CD8-positive, alpha-beta T cell (primary cell): ENCODE measurements at regions of chr22 and their contacts with region 1.

Region 1: DNA sequence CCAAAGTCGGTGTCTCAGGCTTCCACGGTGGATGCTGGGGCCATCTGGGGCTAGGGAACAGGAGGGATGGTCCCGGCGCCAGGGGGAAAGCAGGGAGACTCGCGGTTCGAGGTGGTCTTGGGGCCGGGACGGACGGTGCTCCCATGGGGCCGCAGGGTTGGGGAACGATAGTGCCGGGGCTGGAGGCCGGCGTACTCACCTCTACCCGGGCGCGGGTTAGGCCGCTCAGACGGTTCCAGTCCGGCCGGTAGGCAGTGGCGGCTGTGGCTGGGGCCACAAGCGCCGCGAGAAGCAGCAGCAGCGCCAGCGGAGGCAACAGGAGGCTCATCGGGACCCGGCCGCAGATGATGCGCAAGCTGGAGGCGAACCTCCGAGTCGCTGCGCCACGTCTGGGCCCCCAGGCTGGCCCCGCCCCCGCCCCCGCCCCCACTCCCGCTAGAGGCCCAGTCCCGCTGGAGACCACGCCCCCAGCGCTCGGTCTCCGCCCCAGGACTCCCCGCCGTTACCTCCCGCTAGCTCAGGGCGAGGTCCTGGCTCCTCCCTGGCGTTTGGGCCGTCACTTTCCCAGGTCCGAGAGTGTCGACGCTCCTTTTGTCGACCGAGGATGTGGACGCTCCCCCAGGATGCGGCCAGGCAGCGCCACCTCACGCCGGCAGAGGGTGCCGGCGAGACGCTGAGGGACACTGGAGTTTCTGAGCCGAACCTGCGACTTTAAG is at the start of gene SELENOM:
- DNase-seq: peak; percentile 69 to 94 (median 85)
- ATAC-seq: peak; percentile 96
- H3K4me3 ChIP-seq: peak within 1 kb of the TSS; percentile 80 to 84
- H3K4me3 Mint-ChIP-seq: peak within 1 kb of the TSS; percentile 98
- H3K27ac ChIP-seq: peak within 1 kb of the TSS; percentile 72 to 80
- H3K27ac Mint-ChIP-seq: peak within 1 kb of the TSS; percentile 91
- H3K4me1 ChIP-seq: peaks cover 17% of the 10 kb centered on the region
- H3K4me1 Mint-ChIP-seq: peaks cover 25% of the 10 kb centered on the region
- H3K27me3 ChIP-seq: no peaks in the 10 kb centered on the region
- H3K27me3 Mint-ChIP-seq: no peaks in the 10 kb centered on the region
- CTCF ChIP-seq: peak; percentile 70
- total RNA-seq, gene SELENOM: 55.6 to 62.2 TPM

Region 2: DNA sequence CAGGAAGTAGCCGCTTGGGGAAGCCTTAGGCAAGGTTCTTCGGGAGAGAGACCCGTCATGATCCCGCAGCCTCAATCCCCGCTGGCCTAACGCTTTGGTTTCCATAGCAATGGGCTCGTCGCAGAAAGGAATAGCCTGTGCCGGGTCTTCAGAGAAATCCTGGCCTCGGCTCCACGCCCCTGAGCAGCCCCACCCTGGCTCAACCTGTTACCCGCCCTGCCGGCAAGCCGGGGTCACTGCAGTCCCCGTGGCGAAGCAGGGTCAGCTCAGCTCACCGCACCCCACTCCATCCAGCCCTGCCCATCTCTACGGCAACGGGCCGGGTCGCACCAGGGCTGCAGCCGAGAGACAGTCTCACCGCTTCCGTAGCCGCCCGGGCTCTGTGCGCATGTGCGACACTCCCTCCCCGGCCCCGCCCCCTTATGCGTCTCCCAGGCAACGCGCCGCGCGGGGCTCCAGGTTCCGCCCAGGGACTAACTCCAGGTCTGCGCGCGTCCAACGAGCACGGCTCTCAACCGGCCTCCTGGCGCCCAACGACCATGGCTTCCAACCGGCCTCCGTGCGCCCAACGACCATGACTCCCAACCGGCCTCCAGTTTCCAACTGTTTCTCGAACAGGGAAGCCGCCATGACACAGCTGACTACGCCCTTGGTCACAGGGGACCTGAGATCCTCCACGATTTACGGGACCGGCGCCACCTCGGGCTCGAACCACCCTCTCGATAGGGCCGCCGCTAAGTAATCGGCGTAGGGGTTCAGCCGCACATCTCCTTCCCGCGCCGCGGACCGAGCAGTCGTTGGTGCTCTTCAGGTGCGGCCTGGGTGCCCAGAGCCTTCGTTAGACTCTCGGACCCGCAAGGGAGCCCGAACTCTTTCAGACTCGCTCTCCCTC is 439.6 kb before region 1 on chr22 and contains the start of gene DUSP18:
- CTCF ChIA-PET with region 1: no interaction called
- POLR2A ChIA-PET with region 1: no interaction called
- intact Hi-C with region 1: loop called in 1 of 2 experiments (anchors 5 kb)
- DNase-seq: peak; percentile 88 to 98 (median 95)
- ATAC-seq: peak; percentile 90
- H3K4me3 ChIP-seq: peak within 1 kb of the TSS; percentile 73 to 87
- H3K4me3 Mint-ChIP-seq: peak within 1 kb of the TSS; percentile 96
- H3K27ac ChIP-seq: peak within 1 kb of the TSS; percentile 54 to 72
- H3K27ac Mint-ChIP-seq: peak within 1 kb of the TSS; percentile 94
- H3K4me1 ChIP-seq: peaks cover 11% of the 10 kb centered on the region
- H3K4me1 Mint-ChIP-seq: peaks cover 18% of the 10 kb centered on the region
- H3K27me3 ChIP-seq: no peaks in the 10 kb centered on the region
- H3K27me3 Mint-ChIP-seq: no peaks in the 10 kb centered on the region
- CTCF ChIP-seq: no peak
- total RNA-seq, gene DUSP18: 3.4 to 4.5 TPM

Region 3: DNA sequence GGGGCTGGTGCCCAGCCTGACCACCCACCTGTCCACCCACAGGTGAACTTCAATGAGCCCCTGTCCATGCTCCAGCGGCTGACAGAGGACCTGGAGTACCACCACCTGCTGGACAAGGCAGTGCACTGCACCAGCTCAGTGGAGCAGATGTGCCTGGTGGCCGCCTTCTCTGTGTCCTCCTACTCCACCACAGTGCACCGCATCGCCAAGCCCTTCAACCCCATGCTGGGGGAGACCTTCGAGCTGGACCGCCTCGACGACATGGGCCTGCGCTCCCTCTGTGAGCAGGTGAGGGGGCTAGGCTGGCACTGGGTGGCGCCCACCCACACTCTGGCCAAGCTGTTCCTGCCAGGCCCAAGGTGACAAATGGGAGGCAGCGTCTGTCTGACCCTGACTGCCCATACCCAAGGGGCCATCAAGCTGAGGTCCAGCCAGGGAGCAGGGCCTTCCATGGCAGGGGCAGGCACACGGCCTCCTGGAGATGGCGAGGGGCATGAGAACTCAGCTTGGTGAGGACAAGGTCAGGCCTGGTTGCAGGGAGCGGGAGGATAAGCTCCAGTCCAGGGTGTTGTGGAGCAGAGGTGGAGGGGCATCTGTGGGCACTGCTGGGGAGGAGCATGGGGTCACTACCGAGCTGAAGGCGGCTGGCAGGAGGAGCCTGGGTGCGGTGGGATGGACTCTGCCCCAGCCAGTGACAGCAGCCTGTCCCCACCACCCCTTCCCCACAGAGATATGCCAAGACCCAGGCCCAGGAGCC is 216.5 kb before region 1 on chr22:
- CTCF ChIA-PET with region 1: no interaction called
- POLR2A ChIA-PET with region 1: no interaction called
- intact Hi-C with region 1: no loop called
- DNase-seq: peak in 5 of 9 experiments; percentile 16 to 43 (median 30)
- ATAC-seq: peak; percentile 70
- H3K4me3 ChIP-seq: no peak overlapping the region
- H3K4me3 Mint-ChIP-seq: no peak overlapping the region
- H3K27ac ChIP-seq: no peak overlapping the region
- H3K27ac Mint-ChIP-seq: no peak overlapping the region
- H3K4me1 ChIP-seq: peaks cover 23% of the 10 kb centered on the region
- H3K4me1 Mint-ChIP-seq: peaks cover 23% of the 10 kb centered on the region
- H3K27me3 ChIP-seq: no peaks in the 10 kb centered on the region
- H3K27me3 Mint-ChIP-seq: no peaks in the 10 kb centered on the region
- CTCF ChIP-seq: peak; percentile 65

Region 4: DNA sequence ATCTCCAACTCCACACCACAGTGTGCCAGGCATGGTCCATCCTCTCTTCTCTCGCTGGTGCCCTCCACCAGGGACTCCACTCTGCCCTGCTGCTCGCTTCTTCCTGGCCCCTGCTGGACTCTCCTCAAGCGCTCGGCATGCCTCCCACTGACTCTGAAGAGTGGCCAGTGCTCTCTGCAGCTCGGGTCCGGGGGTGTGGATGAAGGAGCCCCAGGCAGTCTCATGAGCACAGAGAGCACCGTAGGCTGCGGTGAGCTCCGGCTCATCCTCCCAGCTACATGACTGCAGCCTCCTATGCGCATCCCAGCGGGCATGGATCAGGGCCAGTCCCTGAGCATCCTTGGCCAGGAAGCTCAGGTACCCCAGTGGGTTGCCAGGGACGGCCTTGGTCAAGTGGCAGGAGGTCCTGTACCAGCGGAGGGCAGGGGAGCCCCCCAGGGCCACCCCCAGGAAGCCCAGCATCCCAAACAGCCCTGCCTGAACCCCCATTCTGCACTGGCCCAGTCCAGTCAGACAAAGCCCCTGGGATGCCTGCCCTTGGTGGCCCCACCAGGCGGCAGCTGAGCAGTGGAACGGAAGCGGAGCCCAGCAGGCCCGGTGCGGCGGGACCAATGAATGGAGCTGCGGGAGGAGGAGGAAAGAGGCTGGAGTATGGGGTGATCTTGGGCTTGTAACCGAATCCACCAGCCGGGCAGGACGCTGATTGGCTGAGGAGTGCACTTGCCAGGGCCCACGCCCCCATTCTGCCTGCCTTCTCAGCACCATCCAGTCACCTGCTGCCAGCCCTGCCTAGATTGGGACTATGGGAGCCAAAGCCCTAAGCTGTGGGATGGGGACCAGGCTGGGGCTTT is 32.8 kb after region 1 on chr22 and contains the start of gene PLA2G3:
- CTCF ChIA-PET with region 1: no interaction called
- POLR2A ChIA-PET with region 1: no interaction called
- intact Hi-C with region 1: no loop called
- DNase-seq: no peak
- ATAC-seq: no peak
- H3K4me3 ChIP-seq: no peak within 1 kb of the TSS
- H3K4me3 Mint-ChIP-seq: no peak within 1 kb of the TSS
- H3K27ac ChIP-seq: no peak within 1 kb of the TSS
- H3K27ac Mint-ChIP-seq: no peak within 1 kb of the TSS
- H3K4me1 ChIP-seq: no peaks in the 10 kb centered on the region
- H3K4me1 Mint-ChIP-seq: no peaks in the 10 kb centered on the region
- H3K27me3 ChIP-seq: no peaks in the 10 kb centered on the region
- H3K27me3 Mint-ChIP-seq: peaks cover 4% of the 10 kb centered on the region
- CTCF ChIP-seq: no peak
- total RNA-seq, gene PLA2G3: not detected

Region 5: DNA sequence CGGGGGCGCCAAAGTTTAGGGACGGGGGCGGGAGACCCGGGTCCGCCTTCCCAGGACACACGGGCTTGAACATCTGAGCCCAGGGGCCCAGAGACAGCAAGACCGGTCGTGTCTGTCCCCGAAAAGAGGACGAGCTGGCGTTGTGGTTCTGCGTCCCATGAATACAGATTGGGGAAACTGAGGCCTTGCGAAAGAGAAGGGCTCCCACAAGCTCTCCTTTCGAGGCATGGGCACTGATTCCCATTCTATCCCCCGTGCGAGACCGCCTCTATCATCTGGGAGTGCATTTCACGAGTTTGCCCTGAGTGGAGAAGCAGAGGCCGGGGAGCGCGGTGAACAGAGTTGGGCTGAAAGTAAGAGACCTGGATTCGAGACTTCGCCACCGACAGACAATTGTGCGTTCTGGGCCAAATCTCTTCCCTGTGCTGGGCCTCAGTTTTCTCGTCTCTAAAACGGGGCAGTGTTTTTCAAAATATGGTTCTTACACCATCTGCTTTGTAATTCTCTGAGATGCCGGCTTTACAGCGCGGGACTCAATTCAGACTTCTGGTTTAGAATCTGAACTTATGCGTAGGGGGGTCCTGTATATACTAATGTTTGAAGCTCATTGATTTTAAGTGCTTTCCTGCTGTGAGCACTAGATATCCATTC is 53.1 kb after region 1 on chr22:
- CTCF ChIA-PET with region 1: no interaction called
- POLR2A ChIA-PET with region 1: interaction called, 3 read pairs
- intact Hi-C with region 1: loop called (anchors 1 to 2 kb)
- DNase-seq: peak in 6 of 9 experiments; percentile 11 to 55 (median 28)
- ATAC-seq: peak; percentile 34
- H3K4me3 ChIP-seq: peak overlapping the region; percentile 78 to 86
- H3K4me3 Mint-ChIP-seq: peak overlapping the region; percentile 100
- H3K27ac ChIP-seq: peak overlapping the region; percentile 72 to 90
- H3K27ac Mint-ChIP-seq: peak overlapping the region; percentile 98
- H3K4me1 ChIP-seq: peaks cover 26% of the 10 kb centered on the region
- H3K4me1 Mint-ChIP-seq: peaks cover 38% of the 10 kb centered on the region
- H3K27me3 ChIP-seq: no peaks in the 10 kb centered on the region
- H3K27me3 Mint-ChIP-seq: no peaks in the 10 kb centered on the region
- CTCF ChIP-seq: no peak